ENCODE measurements at regions of chr10 and their contacts with region 1.

Region 1: DNA sequence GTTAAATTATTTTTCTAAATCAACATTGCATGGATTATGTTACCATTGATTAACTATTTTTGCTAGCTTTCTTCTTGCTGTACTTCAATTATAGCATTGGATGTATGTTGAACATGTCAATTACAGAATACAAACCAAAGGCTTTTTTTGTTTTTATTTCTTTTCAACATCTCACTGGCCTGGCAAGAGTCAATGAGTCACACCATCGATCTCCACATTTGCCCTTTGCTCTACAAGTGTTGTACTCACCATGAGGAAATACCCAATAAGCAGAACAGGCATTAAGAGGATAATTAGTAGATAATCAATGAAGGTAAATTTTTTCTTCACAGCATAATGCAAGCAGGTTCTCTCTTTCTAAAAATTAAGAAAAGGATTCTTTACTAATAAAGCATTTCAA is 23.3 kb downstream of the ANKRD22 start:
- DNase-seq: no peak
- H3K4me3 Mint-ChIP-seq: no peak overlapping the region
- H3K27ac Mint-ChIP-seq: no peak overlapping the region
- H3K4me1 Mint-ChIP-seq: peaks cover 47% of the 10 kb centered on the region
- H3K27me3 Mint-ChIP-seq: no peaks in the 10 kb centered on the region

Region 2: DNA sequence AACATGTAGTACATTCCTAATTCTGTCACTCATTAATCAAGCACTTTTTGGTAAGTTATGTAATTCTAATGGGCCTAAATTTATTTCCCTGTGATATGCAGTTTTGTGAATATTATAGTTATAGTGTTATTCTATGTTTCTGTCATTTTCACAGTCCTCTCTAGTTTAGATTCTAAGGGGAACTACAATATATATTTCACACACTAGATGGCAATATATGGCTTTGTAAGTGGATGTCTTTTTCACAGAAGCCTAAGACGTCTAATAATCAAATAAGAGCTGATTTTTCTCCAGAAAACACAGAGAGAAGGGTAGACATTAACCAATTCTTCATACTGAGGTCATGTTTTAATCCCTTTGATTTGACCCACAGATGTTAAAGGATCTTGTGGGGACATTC is 263.2 kb before region 1 on chr10:
- CTCF ChIA-PET with region 1: interaction called, 3 read pairs
- intact Hi-C with region 1: loop called (anchors 5 kb)
- DNase-seq: no peak
- H3K4me3 Mint-ChIP-seq: no peak overlapping the region
- H3K27ac Mint-ChIP-seq: no peak overlapping the region
- H3K4me1 Mint-ChIP-seq: no peaks in the 10 kb centered on the region
- H3K27me3 Mint-ChIP-seq: no peaks in the 10 kb centered on the region

Region 3: DNA sequence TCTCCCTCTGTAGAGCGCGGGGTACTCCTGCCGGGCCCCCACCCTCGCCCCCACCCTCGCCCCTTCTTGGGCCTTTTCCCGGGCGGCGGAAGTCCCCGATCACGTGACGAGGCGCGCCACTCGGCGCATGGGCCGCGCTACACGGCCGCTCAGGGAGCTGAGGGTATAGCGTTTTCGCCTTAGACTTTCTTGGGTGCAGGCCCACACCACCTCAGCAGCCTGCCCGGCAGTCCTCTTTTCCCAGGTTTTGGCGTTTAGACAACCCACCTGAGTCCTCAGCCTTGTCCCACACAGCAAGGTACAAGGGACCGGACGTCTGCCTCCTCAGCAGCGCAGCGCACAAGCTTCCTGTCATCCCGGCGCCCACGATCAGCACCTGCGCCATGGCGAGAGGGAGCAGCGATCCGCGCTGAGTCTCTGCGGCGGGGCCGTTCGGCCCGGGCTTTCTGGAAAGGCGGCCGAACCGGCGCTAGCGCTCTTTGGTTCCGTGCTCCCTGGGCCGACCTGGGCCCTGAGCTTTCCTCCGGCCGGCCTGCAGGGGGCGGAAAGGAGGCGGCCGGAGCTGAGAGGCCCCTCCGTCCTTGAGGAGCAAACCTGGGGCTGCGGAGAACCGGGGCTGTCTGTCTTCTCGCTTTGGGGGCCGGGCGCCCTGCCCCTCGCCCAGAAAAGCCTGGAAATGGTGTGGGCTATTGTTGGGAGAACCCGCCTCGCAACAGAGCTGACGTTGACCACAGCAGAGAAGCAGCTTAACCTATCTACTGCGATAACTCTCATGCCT is 245.3 kb before region 1 on chr10 and contains the start of gene RNLS:
- CTCF ChIA-PET with region 1: interaction called, 4 read pairs
- intact Hi-C with region 1: loop called (anchors 5 kb)
- DNase-seq: peak; percentile 76
- H3K4me3 Mint-ChIP-seq: peak within 1 kb of the TSS; percentile 82
- H3K27ac Mint-ChIP-seq: peak within 1 kb of the TSS; percentile 89
- H3K4me1 Mint-ChIP-seq: peaks cover 11% of the 10 kb centered on the region
- H3K27me3 Mint-ChIP-seq: peaks cover 5% of the 10 kb centered on the region
- total RNA-seq, gene RNLS: 4.0 to 4.4 TPM

Region 4: DNA sequence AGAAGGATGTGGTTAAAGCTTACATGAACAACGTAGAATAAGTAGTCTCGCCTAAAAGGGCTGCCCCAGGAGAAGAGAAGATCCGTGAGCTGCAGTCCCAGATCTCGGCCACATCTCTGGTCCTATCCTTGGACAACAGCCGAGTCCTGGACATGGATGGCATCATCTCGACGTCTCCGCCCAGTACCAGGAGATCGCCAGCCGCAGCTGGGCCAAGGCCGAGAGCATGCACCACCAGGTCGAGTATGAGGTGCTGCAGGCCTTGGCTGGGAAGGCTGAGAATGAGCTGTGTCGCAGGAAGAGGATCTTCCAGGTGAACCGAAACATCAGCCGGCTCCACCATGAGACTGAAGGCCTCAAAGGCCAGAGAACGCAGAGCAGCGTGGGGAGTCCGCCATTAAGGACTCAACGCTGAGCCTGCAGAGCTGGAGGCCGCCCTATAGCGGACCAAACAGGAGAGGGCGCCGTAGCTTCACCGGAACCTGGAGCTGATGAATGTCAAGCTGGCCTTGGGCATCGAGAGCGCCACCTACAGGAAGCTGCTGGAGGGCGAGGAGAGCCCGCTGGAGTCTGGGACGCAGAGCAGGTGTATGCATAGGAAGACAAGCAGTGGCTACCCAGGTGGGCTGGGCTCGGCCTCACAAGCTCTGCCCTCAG is 100.1 kb before region 1 on chr10:
- CTCF ChIA-PET with region 1: interaction called, 13 read pairs
- intact Hi-C with region 1: no loop called
- DNase-seq: peak; percentile 68
- H3K4me3 Mint-ChIP-seq: no peak overlapping the region
- H3K27ac Mint-ChIP-seq: no peak overlapping the region
- H3K4me1 Mint-ChIP-seq: peaks cover 2% of the 10 kb centered on the region
- H3K27me3 Mint-ChIP-seq: peaks cover 7% of the 10 kb centered on the region